Sigmoid colon (tissue), 7 donors: ENCODE measurements at regions of chr1 and their contacts with region 1.

Region 1: DNA sequence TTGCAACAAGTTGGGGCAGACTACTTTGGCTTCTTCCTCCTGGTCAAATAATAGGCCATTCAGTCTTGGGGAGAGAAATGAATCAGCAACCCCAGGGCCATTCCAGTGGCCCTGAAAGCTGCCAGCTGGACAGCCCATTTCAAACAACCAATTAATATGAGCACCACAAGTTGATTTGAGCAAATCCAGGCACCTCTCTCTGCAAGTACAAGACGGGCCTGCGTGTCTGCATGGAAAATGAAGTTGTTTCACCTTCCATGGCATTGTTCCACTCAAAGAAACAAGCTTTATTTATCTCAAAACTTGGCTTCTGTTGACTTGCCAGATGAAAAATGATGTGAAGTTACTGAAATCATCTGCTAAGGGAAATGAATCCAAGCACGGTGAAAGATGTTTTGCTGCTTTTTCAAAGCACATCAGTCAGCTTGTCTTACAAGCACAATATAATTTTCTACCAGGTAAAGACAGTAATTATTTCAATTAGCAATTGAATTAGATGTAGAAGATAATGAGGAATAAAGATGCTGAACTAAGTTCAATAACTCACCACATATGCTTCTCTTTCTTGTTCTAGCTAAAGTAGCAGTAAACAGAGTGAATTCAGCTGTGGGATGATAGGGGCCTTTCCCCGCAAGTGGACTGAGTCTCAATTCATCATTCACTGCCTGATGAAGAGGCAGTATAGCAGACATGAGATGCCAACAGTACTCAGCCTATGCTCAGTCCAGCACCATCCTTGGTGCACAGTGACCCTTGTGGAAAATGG is 95.2 kb upstream of the SSX2IP start:
- DNase-seq: peak; percentile 81
- H3K4me3 ChIP-seq: no peak overlapping the region
- H3K27ac ChIP-seq: peak overlapping the region in 3 of 4 donors; percentile 43 to 69 (median 61)
- H3K4me1 ChIP-seq: peaks cover 0 to 20% (median 17%) of the 10 kb centered on the region in 4 donors
- H3K27me3 ChIP-seq: no peaks in the 10 kb centered on the region
- CTCF ChIP-seq: no peak
- EP300 ChIP-seq: peak in 1 of 4 donors; percentile 14
- POLR2A ChIP-seq: no peak

Region 2: GRCh38 chr1:84847253-84848250 is 62.1 kb after region 1 on chr1:
- intact Hi-C with region 1: loop called (anchors 5 kb)
- DNase-seq: peak; percentile 88
- H3K4me3 ChIP-seq: no peak overlapping the region
- H3K27ac ChIP-seq: peak overlapping the region in 1 of 4 donors; percentile 1
- H3K4me1 ChIP-seq: peaks cover 0 to 19% (median 9%) of the 10 kb centered on the region in 4 donors
- H3K27me3 ChIP-seq: no peaks in the 10 kb centered on the region
- CTCF ChIP-seq: no peak
- EP300 ChIP-seq: no peak
- POLR2A ChIP-seq: no peak

Region 3: DNA sequence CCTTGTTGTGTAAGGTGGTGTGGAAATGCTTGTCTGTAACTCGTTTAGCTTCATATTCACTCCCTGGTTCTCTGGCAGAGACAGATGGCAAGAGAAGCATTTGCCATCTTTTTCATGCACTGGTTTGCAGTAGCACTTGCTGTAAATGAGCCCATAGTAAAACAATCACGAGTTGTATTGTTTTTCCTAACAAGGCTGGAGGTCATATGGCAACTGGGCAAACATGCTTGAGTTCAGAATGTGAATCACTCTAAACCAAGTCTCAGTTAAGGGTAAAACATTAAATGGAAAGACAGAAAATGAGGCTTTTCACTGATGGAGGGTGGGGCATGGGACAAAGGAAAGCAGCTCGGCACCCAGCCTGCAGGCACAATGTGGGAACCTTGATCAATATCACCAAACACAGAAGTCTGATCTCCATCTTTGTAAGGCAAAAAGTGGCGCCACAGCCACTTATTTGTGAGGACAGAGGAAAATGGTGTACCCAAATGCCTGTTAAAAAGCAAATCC is 134.1 kb after region 1 on chr1:
- intact Hi-C with region 1: no loop called
- DNase-seq: no peak
- H3K4me3 ChIP-seq: no peak overlapping the region
- H3K27ac ChIP-seq: no peak overlapping the region
- H3K4me1 ChIP-seq: no peaks in the 10 kb centered on the region
- H3K27me3 ChIP-seq: no peaks in the 10 kb centered on the region
- CTCF ChIP-seq: no peak
- EP300 ChIP-seq: no peak
- POLR2A ChIP-seq: no peak